ENCODE measurements at regions of chr5 and their contacts with region 1.

Region 1: GRCh38 chr5:14108170-14108996 is 34.8 kb upstream of the TRIO start:
- DNase-seq: peak; percentile 56
- ATAC-seq: peak; percentile 96

Region 2: GRCh38 chr5:13987843-13988464 is 120.4 kb before region 1 on chr5:
- intact Hi-C with region 1: loop called (anchors 5 kb)
- DNase-seq: no peak
- ATAC-seq: peak; percentile 76

Region 3: DNA sequence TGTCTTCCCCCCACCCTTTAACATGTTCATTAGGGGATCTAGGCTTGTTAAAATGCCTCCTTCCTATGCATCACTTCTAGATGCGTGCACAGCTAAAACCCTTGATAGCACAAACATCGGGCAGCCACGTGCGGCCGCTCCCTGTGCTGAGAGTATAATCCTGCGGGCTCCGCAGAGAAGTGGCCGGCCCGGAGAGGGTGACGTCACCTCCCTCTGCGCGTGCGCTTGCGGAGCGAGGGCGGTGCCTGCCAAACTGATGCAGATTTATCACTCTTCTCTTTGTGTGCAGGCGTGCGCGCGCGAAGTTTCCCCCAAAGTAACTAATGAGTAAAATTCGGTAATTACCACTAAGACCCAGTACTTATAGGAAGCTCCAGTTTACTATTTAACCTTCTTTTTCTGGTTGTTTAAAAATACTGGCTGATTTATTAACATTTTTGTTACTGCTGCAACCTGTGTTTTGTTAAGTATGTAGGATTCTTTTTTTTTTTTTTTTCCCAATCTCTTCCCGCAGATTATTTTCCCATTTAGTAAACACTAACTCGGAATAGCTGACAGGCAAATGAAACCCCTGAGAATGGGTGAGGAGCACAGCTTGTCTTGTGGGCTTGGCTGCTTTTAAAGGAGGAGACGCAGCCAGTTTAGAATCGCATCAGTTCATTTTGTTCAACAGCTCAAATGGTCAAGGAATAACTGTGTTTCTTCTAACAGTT is 156.4 kb after region 1 on chr5:
- intact Hi-C with region 1: loop called (anchors 5 kb)
- DNase-seq: peak; percentile 95
- ATAC-seq: peak; percentile 90

Measured in Right ventricle myocardium superior (tissue), 1 donor.